ENCODE measurements at regions of chr1 and their contacts with region 1.

Region 1: GRCh38 chr1:111755331-111756123 is at the start of gene DDX20:
- DNase-seq: peak; percentile 92
- H3K4me3 Mint-ChIP-seq: peak within 1 kb of the TSS; percentile 83
- H3K27ac Mint-ChIP-seq: peak within 1 kb of the TSS; percentile 97
- H3K4me1 Mint-ChIP-seq: peaks cover 35% of the 10 kb centered on the region
- H3K27me3 Mint-ChIP-seq: peaks cover 12% of the 10 kb centered on the region
- total RNA-seq, gene DDX20: 21.5 and 25.2 TPM in 2 replicates

Region 2: GRCh38 chr1:111139956-111140679 is 615.4 kb before region 1 on chr1 and contains the starts of genes CEPT1 and DRAM2:
- intact Hi-C with region 1: loop called (anchors 5 kb)
- DNase-seq: peak; percentile 89
- H3K4me3 Mint-ChIP-seq: peak within 1 kb of the TSS; percentile 100
- H3K27ac Mint-ChIP-seq: peak within 1 kb of the TSS; percentile 100
- H3K4me1 Mint-ChIP-seq: peaks cover 40% of the 10 kb centered on the region
- H3K27me3 Mint-ChIP-seq: no peaks in the 10 kb centered on the region
- total RNA-seq, gene CEPT1: 32.5 and 37.3 TPM in 2 replicates
- total RNA-seq, gene DRAM2: 24.0 and 26.6 TPM in 2 replicates

Region 3: DNA sequence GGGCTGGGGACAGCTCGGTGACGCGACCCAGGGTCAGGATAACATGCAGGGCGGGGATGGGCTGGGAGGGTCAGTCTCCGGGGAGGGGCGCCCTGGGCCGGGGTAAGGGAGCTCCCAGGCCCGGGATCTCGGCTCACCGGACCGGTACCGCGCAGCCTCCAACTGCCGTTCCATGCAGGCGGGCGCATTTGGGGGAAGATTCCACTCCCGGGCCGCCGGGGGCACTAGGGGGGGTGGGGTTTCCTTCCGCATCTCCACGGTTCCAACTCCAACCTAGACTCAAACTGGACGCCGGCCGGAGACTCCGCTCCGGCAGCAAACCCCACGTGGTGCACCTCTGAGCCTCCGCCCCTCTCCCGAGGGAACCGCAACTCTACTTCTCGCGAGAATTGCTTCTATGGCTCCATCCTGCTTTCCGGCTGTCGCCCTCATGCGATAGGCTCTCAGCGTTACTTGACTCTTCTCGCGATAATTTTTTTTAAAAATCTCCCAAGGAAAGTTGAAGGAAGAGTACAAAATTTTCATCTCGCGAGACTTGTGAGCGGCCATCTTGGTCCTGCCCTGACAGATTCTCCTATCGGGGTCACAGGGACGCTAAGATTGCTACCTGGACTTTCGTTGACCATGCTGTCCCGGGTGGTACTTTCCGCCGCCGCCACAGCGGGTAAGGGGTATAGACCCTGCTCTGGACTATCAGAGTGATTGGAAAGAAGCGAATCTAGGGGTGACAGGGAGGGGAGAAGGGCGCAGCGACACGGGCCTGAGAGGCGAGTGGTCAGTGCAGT is 306.4 kb before region 1 on chr1 and contains the starts of genes ATP5PB and WDR77:
- intact Hi-C with region 1: loop called (anchors 1 kb)
- DNase-seq: peak; percentile 91
- H3K4me3 Mint-ChIP-seq: peak within 1 kb of the TSS; percentile 100
- H3K27ac Mint-ChIP-seq: peak within 1 kb of the TSS; percentile 96
- H3K4me1 Mint-ChIP-seq: peaks cover 74% of the 10 kb centered on the region
- H3K27me3 Mint-ChIP-seq: no peaks in the 10 kb centered on the region
- total RNA-seq, gene ATP5PB: 280 and 282 TPM in 2 replicates
- total RNA-seq, gene WDR77: 61.3 and 62.5 TPM in 2 replicates

Region 4: GRCh38 chr1:111598544-111598943 is 157.0 kb before region 1 on chr1:
- intact Hi-C with region 1: loop called (anchors 1 kb)
- DNase-seq: peak; percentile 39
- H3K4me3 Mint-ChIP-seq: peak overlapping the region; percentile 46
- H3K27ac Mint-ChIP-seq: peak overlapping the region; percentile 99
- H3K4me1 Mint-ChIP-seq: peaks cover 96% of the 10 kb centered on the region
- H3K27me3 Mint-ChIP-seq: no peaks in the 10 kb centered on the region

Region 5: GRCh38 chr1:111611986-111612385 is 143.5 kb before region 1 on chr1:
- intact Hi-C with region 1: no loop called
- DNase-seq: no peak
- H3K4me3 Mint-ChIP-seq: no peak overlapping the region
- H3K27ac Mint-ChIP-seq: no peak overlapping the region
- H3K4me1 Mint-ChIP-seq: peaks cover 42% of the 10 kb centered on the region
- H3K27me3 Mint-ChIP-seq: no peaks in the 10 kb centered on the region

Region 6: DNA sequence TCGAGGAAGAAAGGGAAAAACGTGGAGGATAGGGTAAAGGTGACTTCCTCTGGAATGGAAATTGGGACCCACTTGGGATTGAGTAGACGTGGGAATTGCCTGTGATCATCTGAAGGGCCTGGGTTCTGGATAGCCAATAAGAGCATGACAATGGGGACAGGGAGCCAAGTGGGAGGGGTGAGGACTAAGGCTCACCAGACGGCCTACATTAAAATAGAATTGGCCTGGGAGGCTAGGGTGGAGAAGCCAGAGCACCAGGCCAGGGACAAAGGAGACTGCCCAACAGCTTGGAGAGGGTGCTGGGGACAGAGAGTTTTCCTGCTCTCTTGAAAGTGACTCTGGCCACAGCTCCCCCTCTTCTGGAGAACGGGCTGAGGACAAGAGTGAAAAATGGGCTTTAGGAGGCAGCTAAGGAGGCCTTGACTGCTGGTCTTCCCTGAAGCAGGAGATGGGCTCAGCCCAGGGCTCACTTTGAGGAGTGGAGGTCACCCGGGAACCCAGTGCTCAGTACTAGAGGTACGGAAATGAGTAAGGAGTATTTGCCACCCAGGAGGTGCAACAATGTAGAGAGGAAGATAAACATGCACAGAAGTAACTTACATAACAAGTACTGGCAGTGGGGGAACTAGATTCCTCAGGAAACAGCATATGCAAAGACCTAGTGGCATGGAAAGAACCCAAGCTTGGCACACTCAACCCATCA is 35.1 kb before region 1 on chr1:
- intact Hi-C with region 1: loop called (anchors 2 kb)
- DNase-seq: no peak
- H3K4me3 Mint-ChIP-seq: no peak overlapping the region
- H3K27ac Mint-ChIP-seq: peak overlapping the region; percentile 32
- H3K4me1 Mint-ChIP-seq: peaks cover 7% of the 10 kb centered on the region
- H3K27me3 Mint-ChIP-seq: no peaks in the 10 kb centered on the region

Region 7: GRCh38 chr1:111769517-111770146 is 14.1 kb after region 1 on chr1:
- intact Hi-C with region 1: loop called (anchors 1 kb)
- DNase-seq: peak; percentile 14
- H3K4me3 Mint-ChIP-seq: no peak overlapping the region
- H3K27ac Mint-ChIP-seq: no peak overlapping the region
- H3K4me1 Mint-ChIP-seq: peaks cover 15% of the 10 kb centered on the region
- H3K27me3 Mint-ChIP-seq: no peaks in the 10 kb centered on the region